Ascending aorta (tissue), 2 donors: ENCODE measurements at regions of chrX and their contacts with region 1.

Region 1: DNA sequence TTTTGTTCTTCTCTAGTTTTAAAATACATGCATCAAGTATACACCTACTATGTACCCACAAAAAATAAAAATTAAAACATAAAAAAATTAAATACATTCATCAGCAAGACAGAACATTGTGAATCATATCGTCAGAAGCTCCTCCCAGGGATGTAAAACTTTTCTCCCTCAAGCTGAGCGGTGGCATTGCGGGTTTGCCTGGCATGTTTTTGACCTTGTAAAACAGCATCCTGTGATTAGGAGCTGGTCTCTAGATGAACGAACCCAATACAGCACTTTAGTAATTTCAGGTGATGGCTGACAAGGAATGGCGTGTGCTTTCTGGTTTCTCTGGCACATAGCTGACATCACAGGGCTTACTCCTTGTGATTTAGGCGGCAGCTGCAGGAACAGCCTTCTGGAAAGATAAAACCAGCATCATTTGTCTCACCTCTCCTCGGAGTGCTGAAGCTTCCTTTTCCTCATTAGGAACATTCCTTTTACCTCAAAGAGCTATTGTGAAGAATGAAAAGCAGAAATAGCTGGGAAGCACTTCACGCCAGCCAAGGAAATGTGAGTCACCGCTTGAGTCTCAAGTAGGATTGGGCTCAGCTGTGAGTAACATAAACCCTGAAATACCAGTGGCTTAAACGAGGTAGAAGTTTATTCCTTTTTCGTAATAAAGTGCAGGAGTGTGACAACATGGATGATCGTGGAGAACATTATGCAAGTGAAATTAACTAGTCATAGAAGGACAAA is 44.3 kb downstream of the NYX start:
- DNase-seq: peak in 1 of 2 donors; percentile 68
- H3K4me3 ChIP-seq: no peak overlapping the region
- H3K27ac ChIP-seq: peak overlapping the region in 1 of 2 donors; percentile 10
- H3K4me1 ChIP-seq: no peaks in the 10 kb centered on the region
- H3K27me3 ChIP-seq: no peaks in the 10 kb centered on the region
- CTCF ChIP-seq: no peak

Region 2: DNA sequence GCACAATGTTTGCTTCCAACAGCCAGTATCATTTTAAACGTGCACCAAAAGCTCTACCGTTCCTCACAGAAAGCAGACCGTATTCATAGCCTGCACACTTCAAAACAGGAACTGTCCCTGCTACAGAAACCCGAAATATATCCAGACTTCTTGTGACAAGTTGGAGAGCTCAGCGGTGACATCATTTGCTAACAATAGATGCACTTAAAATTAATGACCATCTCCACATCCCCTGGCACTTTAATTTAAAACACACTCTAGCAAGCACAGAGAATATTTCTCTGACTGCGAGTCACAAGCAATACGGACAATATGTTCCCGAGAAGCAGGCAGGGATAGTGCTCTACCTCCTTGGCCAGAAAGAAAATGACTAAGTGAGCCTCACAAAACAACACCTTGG is 41.8 kb before region 1 on chrX:
- intact Hi-C with region 1: loop called (anchors 5 kb)
- DNase-seq: no peak
- H3K4me3 ChIP-seq: peak overlapping the region; percentile 4 to 42
- H3K27ac ChIP-seq: peak overlapping the region; percentile 66 to 83
- H3K4me1 ChIP-seq: peaks cover 0 to 7% of the 10 kb centered on the region in 2 donors
- H3K27me3 ChIP-seq: no peaks in the 10 kb centered on the region
- CTCF ChIP-seq: no peak